AG04450 (cell line): ENCODE measurements at regions of chr13 and their contacts with region 1.

Region 1: DNA sequence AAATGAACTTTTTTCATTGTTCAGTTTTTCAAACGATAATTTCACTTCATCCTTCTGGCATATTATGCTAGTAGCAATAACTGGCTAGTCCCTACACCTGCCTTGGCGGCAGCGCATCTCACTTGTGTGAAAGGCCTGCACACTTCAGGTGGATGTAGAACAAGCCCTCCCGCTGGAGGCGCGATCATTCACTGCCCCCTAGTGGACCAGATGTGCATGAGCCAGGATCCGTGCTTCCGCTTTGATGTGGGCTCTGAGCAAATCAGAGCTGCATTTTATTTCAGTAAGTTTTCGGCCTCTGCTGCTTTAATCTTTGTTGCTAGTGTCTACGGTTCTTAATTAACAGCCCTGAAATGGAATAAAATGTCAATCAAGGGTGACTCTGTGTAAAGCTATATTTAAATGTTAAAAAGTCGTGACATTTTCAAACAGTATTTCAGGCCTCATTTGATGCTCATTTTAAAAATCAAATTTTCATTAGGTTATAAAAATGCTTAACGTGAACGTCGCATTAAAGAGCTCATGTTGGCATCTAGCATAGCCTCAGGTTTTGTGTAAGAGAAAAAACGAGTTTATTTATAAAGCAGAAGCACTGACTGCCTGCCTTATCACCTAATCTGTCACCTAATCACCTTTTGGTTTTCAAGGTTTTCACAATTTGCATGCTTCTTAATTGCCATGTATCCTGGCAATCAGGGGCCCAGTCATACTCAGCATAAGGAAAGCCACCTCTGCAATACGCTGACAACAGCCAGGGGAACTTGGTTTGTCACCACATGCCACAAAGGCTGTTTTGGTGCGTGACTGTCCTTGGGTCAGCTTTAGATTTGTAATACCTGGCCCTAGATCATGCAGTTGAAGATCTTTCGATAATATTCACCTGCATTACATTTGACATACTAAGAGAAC is 112.2 kb downstream of the TEX26 start:
- DNase-seq: peak; percentile 57
- H3K4me3 ChIP-seq: no peak overlapping the region
- H3K27ac ChIP-seq: peak overlapping the region; percentile 95
- H3K27me3 ChIP-seq: no peaks in the 10 kb centered on the region
- CTCF ChIP-seq: peak; percentile 97

Region 2: DNA sequence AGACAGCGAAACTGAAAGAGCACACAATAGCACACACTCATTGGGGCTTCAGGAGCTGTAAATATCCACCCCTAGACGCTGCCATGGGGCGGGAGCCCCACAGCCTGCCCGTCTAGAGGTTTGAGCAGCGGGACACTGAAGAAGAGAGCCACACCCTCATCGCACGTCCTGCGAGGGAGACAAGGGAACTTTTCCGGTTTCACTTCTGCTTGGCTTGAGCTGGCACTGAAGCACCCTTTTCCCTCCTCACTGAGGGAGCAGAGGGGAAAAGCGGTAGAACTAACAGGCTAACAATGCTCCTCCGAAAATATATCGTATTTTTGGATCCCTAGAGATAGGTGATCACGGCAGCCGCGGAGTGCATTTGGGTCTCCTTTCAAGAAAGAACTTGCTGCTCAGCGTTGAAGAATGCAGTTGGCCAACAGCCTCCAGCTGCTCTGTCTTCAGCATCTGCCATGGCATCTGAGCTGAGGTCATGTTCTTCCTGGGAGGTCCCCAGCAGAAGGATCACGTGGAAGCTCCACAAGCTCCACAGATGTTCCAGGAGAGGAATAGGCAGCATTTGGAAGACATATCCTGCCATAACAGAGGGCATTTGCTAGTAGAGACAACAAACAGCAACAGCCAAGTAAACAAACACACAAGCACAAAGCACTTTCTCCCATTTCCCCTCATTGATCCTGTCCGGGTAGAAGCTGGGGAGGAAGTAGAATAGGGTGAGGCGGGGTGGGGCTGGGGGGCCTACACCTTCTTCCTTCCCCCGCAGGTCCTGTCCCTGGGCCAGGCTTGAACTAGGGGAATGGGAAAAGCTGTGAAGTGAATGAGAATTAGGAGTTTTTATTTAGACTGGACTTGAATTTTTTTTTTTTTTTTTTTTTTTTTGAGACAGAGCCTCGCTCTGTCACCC is 354.1 kb before region 1 on chr13:
- CTCF ChIA-PET with region 1: interaction called, 11 read pairs
- POLR2A ChIA-PET with region 1: no interaction called
- DNase-seq: peak; percentile 99
- H3K4me3 ChIP-seq: peak overlapping the region; percentile 64
- H3K27ac ChIP-seq: peak overlapping the region; percentile 96
- H3K27me3 ChIP-seq: no peaks in the 10 kb centered on the region
- CTCF ChIP-seq: no peak

Region 3: GRCh38 chr13:30847650-30848307 is 196.9 kb before region 1 on chr13:
- CTCF ChIA-PET with region 1: interaction called, 12 read pairs
- POLR2A ChIA-PET with region 1: no interaction called
- DNase-seq: peak; percentile 93
- H3K4me3 ChIP-seq: peak overlapping the region; percentile 21
- H3K27ac ChIP-seq: peak overlapping the region; percentile 97
- H3K27me3 ChIP-seq: no peaks in the 10 kb centered on the region
- CTCF ChIP-seq: no peak

Region 4: GRCh38 chr13:30968846-30969245 is 75.8 kb before region 1 on chr13:
- CTCF ChIA-PET with region 1: interaction called, 17 read pairs
- POLR2A ChIA-PET with region 1: no interaction called
- DNase-seq: no peak
- H3K4me3 ChIP-seq: no peak overlapping the region
- H3K27ac ChIP-seq: no peak overlapping the region
- H3K27me3 ChIP-seq: no peaks in the 10 kb centered on the region
- CTCF ChIP-seq: no peak